ENCODE measurements at regions of chr12 and their contacts with region 1.

Region 1: GRCh38 chr12:27024291-27024690 is 1.9 kb downstream of the MED21 start:
- DNase-seq: no peak
- ATAC-seq: no peak
- H3K4me3 ChIP-seq: no peak overlapping the region
- H3K4me3 Mint-ChIP-seq: peak overlapping the region; percentile 91
- H3K27ac ChIP-seq: no peak overlapping the region
- H3K27ac Mint-ChIP-seq: peak overlapping the region; percentile 92
- H3K4me1 ChIP-seq: peaks cover 19% of the 10 kb centered on the region
- H3K4me1 Mint-ChIP-seq: peaks cover 43% of the 10 kb centered on the region
- H3K27me3 ChIP-seq: no peaks in the 10 kb centered on the region
- H3K27me3 Mint-ChIP-seq: no peaks in the 10 kb centered on the region
- CTCF ChIP-seq: no peak

Region 2: GRCh38 chr12:26113853-26114719 is 910.2 kb before region 1 on chr12:
- CTCF ChIA-PET with region 1: no interaction called
- POLR2A ChIA-PET with region 1: no interaction called
- intact Hi-C with region 1: loop called in 1 of 2 experiments (anchors 10 kb)
- DNase-seq: peak; percentile 45 to 87 (median 66)
- ATAC-seq: peak; percentile 76
- H3K4me3 ChIP-seq: peak overlapping the region; percentile 57
- H3K4me3 Mint-ChIP-seq: peak overlapping the region; percentile 87
- H3K27ac ChIP-seq: no peak overlapping the region
- H3K27ac Mint-ChIP-seq: peak overlapping the region; percentile 45
- H3K4me1 ChIP-seq: peaks cover 12% of the 10 kb centered on the region
- H3K4me1 Mint-ChIP-seq: peaks cover 4% of the 10 kb centered on the region
- H3K27me3 ChIP-seq: peaks cover 3 to 20% of the 10 kb centered on the region in 2 experiments
- H3K27me3 Mint-ChIP-seq: peaks cover 32% of the 10 kb centered on the region
- CTCF ChIP-seq: no peak

Region 3: DNA sequence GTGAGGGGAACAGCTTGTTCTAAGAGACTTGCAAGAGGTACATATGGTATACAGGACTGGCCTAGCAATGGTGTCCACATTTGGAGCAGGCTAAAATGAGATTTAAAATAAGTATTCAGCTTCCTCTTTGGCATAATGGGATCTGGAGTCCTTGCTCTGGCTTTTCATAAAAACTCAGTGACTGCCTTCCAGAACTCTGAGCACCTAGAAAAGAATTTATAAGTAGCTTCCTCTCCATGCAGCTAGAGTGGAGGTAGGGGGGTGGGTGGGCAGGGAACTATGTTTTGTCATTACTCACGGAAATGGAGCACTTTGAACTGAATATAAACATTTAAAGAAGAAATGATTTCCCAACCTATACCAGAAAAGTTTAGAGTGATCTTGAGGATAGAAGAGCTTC is 61.4 kb after region 1 on chr12:
- CTCF ChIA-PET with region 1: no interaction called
- POLR2A ChIA-PET with region 1: no interaction called
- intact Hi-C with region 1: no loop called
- DNase-seq: no peak
- ATAC-seq: no peak
- H3K4me3 ChIP-seq: no peak overlapping the region
- H3K4me3 Mint-ChIP-seq: no peak overlapping the region
- H3K27ac ChIP-seq: no peak overlapping the region
- H3K27ac Mint-ChIP-seq: no peak overlapping the region
- H3K4me1 ChIP-seq: no peaks in the 10 kb centered on the region
- H3K4me1 Mint-ChIP-seq: no peaks in the 10 kb centered on the region
- H3K27me3 ChIP-seq: no peaks in the 10 kb centered on the region
- H3K27me3 Mint-ChIP-seq: no peaks in the 10 kb centered on the region
- CTCF ChIP-seq: no peak

Region 4: GRCh38 chr12:27142101-27142721 is 117.9 kb after region 1 on chr12:
- CTCF ChIA-PET with region 1: no interaction called
- POLR2A ChIA-PET with region 1: no interaction called
- intact Hi-C with region 1: loop called in 1 of 2 experiments (anchors 5 kb)
- DNase-seq: peak in 11 of 14 experiments; percentile 1 to 75 (median 17)
- ATAC-seq: no peak
- H3K4me3 ChIP-seq: no peak overlapping the region
- H3K4me3 Mint-ChIP-seq: no peak overlapping the region
- H3K27ac ChIP-seq: no peak overlapping the region
- H3K27ac Mint-ChIP-seq: no peak overlapping the region
- H3K4me1 ChIP-seq: peaks cover 4% of the 10 kb centered on the region
- H3K4me1 Mint-ChIP-seq: no peaks in the 10 kb centered on the region
- H3K27me3 ChIP-seq: no peaks in the 10 kb centered on the region
- H3K27me3 Mint-ChIP-seq: no peaks in the 10 kb centered on the region
- CTCF ChIP-seq: peak; percentile 82

Region 5: DNA sequence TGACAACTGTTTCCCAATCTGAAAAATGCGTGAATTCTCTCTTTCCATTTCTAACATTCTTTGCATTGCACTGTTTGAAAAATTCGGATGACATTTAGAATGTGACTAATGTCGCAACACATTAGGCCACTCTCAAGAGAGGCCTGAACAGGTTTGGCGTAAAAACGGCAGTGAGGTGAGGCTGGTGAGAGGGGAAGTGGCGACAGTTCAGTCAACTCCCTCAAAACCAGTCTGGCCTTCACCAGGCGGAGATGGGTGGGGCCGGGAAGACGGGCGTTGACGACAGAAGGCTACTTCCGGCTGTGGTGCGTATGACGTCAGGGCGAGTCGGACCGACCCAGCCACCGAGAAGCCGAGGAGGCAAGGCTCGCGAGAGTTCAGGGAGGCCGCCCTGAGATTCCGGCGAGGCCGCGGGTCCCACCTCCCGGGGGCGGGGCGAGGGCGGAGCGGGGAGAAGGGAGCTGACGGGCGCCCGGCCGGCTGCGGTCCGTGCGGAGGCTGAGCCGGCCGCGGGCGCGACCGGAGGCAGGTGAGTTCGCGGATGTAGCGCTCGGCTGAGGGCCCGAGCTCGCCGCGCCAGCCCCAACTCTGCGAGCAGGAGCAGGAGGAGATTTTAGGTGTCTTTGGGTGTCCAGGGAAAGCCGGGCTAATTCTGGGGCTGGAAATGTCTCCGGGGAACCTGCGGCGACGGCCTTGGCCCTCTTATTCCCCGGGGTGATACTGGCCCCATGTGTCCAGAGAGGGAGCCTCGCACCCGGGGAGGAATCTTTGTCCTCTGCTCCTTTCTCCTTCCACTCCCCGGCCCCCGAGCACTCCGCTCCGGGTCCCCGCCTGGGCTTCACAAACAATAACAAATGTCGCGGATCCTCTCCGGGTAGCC is 219.8 kb after region 1 on chr12 and contains the start of gene STK38L:
- CTCF ChIA-PET with region 1: no interaction called
- POLR2A ChIA-PET with region 1: interaction called, 16 read pairs
- intact Hi-C with region 1: loop called (anchors 2 to 10 kb)
- DNase-seq: peak; percentile 87 to 99 (median 94)
- ATAC-seq: peak; percentile 95
- H3K4me3 ChIP-seq: peak within 1 kb of the TSS; percentile 93
- H3K4me3 Mint-ChIP-seq: peak within 1 kb of the TSS; percentile 99
- H3K27ac ChIP-seq: peak within 1 kb of the TSS; percentile 60 to 77
- H3K27ac Mint-ChIP-seq: peak within 1 kb of the TSS; percentile 92
- H3K4me1 ChIP-seq: peaks cover 15% of the 10 kb centered on the region
- H3K4me1 Mint-ChIP-seq: peaks cover 64% of the 10 kb centered on the region
- H3K27me3 ChIP-seq: no peaks in the 10 kb centered on the region
- H3K27me3 Mint-ChIP-seq: no peaks in the 10 kb centered on the region
- CTCF ChIP-seq: no peak
- total RNA-seq, gene STK38L: 18.3 to 21.0 TPM

Region 6: DNA sequence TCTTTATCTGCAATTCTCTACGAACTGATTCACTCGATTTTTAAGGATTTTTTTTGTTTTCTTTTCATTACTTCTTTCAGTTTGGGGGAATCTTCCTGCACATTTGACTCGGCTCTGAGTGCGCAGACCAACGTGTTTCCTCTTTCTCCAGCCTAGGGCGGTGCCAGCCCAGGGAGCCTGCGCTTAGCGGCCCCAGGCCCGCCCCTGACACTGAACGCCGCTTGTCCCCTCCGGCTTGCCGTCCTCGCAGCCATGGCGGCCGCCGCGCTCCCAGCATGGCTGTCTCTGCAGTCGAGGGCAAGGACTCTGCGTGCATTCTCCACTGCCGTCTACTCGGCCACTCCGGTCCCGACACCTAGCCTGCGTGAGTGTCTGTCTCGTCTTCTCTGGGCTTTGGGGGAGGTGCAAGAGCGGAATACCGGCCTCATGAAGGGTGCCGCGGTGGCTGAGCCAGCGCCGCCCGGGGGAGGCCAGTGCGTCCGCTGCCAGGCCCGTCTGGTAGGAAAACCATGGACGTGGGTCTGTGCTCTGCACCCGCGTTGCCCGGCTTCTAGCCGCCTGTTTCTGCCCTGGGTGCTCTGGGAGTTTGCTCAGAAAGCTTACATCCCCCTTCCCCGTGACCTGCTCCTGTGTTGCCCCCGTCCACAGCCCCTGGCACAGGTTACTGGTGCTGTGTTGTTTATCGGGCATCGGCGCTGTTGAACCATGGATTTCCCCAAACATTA is 686.5 kb after region 1 on chr12 and contains the start of gene MRPS35:
- CTCF ChIA-PET with region 1: no interaction called
- POLR2A ChIA-PET with region 1: no interaction called
- intact Hi-C with region 1: loop called (anchors 5 to 10 kb)
- DNase-seq: peak; percentile 83 to 95 (median 88)
- ATAC-seq: peak; percentile 96
- H3K4me3 ChIP-seq: peak within 1 kb of the TSS; percentile 71
- H3K4me3 Mint-ChIP-seq: peak within 1 kb of the TSS; percentile 98
- H3K27ac ChIP-seq: peak within 1 kb of the TSS; percentile 60 to 69
- H3K27ac Mint-ChIP-seq: peak within 1 kb of the TSS; percentile 96
- H3K4me1 ChIP-seq: peaks cover 25% of the 10 kb centered on the region
- H3K4me1 Mint-ChIP-seq: peaks cover 41% of the 10 kb centered on the region
- H3K27me3 ChIP-seq: no peaks in the 10 kb centered on the region
- H3K27me3 Mint-ChIP-seq: no peaks in the 10 kb centered on the region
- CTCF ChIP-seq: no peak
- total RNA-seq, gene MRPS35: 22.1 to 23.9 TPM